ENCODE measurements at regions of chr4 and their contacts with region 1.

Region 1: GRCh38 chr4:3783406-3784306 is 17.5 kb downstream of the ADRA2C start:
- DNase-seq: no peak
- ATAC-seq: peak; percentile 27
- H3K4me3 ChIP-seq: peak overlapping the region in 1 of 3 experiments; percentile 48; a peak in 3 of 6 replicates
- H3K27ac ChIP-seq: peak overlapping the region; percentile 72
- H3K4me1 ChIP-seq: peaks cover 95% of the 10 kb centered on the region
- H3K27me3 ChIP-seq: peaks cover 0 to under 1% of the 10 kb centered on the region in 2 experiments; a peak in 1 of 5 replicates
- CTCF ChIP-seq: peak; percentile 75
- EP300 ChIP-seq: no peak
- POLR2A ChIP-seq: no peak
- RAD21 ChIP-seq: peak; percentile 48

Region 2: DNA sequence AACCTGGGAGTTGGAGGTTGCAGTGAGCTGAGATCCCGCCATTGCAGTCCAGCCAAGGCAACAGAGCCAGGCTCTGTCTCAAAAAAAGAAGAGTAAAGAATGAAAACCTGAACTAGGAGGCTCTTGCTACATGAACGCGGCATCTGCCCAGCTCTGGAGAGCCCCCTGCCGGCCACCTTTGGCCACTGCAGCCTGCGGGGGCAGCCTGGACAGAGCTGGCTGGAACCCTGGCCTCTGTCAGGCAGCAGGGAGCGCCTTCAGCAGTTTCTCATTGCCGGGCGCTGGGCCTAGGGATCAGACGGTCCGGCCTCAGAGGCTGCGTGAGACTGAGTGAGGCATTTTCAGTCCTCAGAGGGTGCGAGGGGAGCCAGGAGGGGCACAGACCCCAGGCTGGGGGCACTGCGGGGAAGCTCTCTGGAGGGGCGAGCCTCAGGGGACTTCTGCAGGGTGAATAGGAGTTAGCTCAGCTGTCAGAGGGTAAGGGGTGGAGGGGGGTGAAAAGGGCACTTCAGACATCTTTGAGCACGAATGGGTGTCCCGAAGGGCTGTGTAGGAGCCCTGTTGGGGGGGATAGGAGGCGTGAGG is 303.0 kb before region 1 on chr4:
- CTCF ChIA-PET with region 1: no interaction called
- POLR2A ChIA-PET with region 1: no interaction called
- in situ Hi-C with region 1: no loop called
- intact Hi-C with region 1: no loop called
- DNase-seq: peak; percentile 66
- ATAC-seq: peak; percentile 83
- H3K4me3 ChIP-seq: no peak overlapping the region
- H3K27ac ChIP-seq: no peak overlapping the region
- H3K4me1 ChIP-seq: peaks cover 28% of the 10 kb centered on the region
- H3K27me3 ChIP-seq: peaks cover 26 to 85% of the 10 kb centered on the region in 2 experiments
- CTCF ChIP-seq: peak; percentile 95
- EP300 ChIP-seq: no peak
- POLR2A ChIP-seq: no peak
- RAD21 ChIP-seq: peak; percentile 74

Region 3: DNA sequence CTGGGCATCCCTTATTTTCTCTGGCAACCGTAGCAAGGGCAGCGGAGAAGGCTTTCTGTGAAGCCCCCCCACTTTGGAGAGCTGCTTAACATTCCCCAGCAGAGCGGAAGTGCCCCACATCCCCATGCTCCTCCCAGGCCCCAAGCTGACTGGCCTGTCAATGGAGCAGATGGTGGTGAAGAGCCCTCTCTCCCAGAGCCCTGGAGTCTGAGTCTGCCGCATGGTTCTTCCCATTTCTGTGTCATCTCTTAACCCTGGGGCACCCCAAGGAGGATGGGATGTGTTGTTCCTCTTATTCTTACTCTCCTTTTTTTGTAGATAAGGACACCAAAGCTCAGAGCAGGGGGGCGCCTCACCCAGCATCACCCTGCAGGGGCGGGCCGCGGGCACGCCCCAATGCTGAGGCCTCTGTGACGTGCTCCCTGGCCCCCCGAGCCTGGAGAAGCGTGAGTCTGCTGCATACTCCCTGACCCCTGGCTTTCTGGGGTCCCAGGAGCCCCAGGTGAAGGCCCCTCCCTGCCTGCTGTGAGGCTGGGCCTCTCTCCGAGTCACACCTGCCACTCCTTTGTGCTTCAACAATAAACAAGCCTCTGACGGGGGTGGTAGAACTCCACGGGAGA is 18.4 kb after region 1 on chr4:
- CTCF ChIA-PET with region 1: no interaction called
- POLR2A ChIA-PET with region 1: interaction called, 46 read pairs
- in situ Hi-C with region 1: no loop called
- intact Hi-C with region 1: no loop called
- DNase-seq: no peak
- ATAC-seq: no peak
- H3K4me3 ChIP-seq: no peak overlapping the region; a peak in 1 of 6 replicates
- H3K27ac ChIP-seq: peak overlapping the region; percentile 73
- H3K4me1 ChIP-seq: peaks cover 59% of the 10 kb centered on the region
- H3K27me3 ChIP-seq: peaks cover 0 to 36% of the 10 kb centered on the region in 2 experiments; a peak in 3 of 5 replicates
- CTCF ChIP-seq: no peak
- EP300 ChIP-seq: no peak
- POLR2A ChIP-seq: no peak
- RAD21 ChIP-seq: no peak

Region 4: GRCh38 chr4:3827616-3828492 is 44.2 kb after region 1 on chr4:
- CTCF ChIA-PET with region 1: no interaction called
- POLR2A ChIA-PET with region 1: interaction called, 88 read pairs
- in situ Hi-C with region 1: no loop called
- intact Hi-C with region 1: loop called (anchors 1 kb)
- DNase-seq: peak; percentile 85
- ATAC-seq: peak; percentile 75
- H3K4me3 ChIP-seq: peak overlapping the region; percentile 4 to 61 (median 5); a peak in 3 of 6 replicates
- H3K27ac ChIP-seq: peak overlapping the region; percentile 91
- H3K4me1 ChIP-seq: peaks cover 100% of the 10 kb centered on the region
- H3K27me3 ChIP-seq: no peaks in the 10 kb centered on the region
- CTCF ChIP-seq: peak; percentile 47
- EP300 ChIP-seq: peak in 1 of 2 experiments; percentile 54; a peak in 1 of 4 replicates
- POLR2A ChIP-seq: peak in 1 of 2 experiments; percentile 38; a peak in 1 of 4 replicates
- RAD21 ChIP-seq: peak; percentile 56

Region 5: DNA sequence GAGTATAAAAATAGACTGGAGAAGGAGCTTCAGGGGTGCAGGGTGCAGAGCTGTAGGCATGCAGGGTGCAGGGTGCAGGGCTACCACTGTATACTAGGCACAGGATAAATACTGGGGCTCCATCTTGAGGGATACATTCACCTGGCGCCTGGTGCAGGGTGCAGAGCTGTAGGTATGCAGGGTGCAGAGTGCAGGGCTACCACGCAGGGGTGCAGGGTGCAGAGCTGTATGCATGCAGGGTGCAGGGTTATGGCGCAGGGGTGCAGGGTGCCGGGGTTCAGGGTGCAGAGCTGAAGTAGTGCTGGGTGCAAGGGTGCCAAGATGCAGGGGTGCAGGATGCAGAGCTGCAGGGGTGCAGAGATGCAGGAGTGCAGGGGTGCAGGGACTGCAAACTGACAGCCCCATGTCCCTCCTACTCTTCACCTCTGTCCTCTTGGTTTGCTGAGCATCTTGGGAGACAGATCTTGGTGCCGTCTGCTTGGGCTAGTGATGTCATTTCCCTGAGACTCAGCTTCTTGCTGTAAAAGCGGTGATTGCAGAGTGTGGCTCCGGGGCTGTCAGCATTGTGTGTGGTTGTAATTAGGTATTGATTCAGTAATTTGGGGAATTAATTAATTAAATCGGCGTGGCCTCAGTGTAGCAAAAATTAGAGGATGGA is 73.7 kb after region 1 on chr4:
- CTCF ChIA-PET with region 1: no interaction called
- POLR2A ChIA-PET with region 1: no interaction called
- in situ Hi-C with region 1: no loop called
- intact Hi-C with region 1: no loop called
- DNase-seq: no peak
- ATAC-seq: no peak; the same call in 2 of the 3 replicates
- H3K4me3 ChIP-seq: no peak overlapping the region
- H3K27ac ChIP-seq: no peak overlapping the region
- H3K4me1 ChIP-seq: peaks cover 41% of the 10 kb centered on the region
- H3K27me3 ChIP-seq: peaks cover 7 to 71% of the 10 kb centered on the region in 2 experiments; a peak in 4 of 5 replicates
- CTCF ChIP-seq: no peak
- EP300 ChIP-seq: no peak
- POLR2A ChIP-seq: no peak
- RAD21 ChIP-seq: no peak

Region 6: DNA sequence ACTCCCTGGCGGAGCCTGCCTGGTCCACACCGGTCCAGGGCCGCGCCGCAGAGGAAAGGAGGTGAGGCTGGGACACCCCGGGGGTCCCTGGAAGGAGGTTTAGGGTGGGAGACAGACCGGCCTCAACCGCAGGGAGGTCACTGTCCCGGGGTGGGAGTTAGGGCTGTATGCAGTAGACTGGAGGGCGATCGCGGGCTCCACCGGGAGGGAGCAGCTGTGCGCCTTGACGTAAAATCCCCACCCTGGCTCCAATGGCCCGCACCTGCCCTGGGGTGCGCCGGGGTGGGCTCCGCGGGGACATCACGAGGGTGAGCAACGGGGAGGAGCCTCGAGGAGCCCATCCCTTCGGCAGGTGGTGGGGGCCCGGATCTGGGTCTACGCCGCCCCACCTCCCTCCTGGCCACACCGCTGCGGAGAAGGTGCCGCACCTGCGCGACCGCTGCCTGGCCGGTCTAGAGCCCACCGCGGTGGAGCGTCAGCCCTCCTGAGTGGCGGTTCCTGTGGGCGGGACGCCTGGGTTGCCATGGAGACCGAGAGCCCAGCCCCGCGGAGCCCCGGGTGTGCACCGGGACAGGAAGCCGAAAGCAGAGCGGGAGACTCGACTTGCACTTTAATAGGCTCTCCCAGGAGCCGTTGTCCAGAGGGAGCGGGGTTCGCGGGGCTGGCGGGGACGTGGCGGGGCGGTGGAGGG is 87.7 kb after region 1 on chr4:
- CTCF ChIA-PET with region 1: no interaction called
- POLR2A ChIA-PET with region 1: interaction called, 3 read pairs
- in situ Hi-C with region 1: loop called (anchors 5 kb)
- intact Hi-C with region 1: loop called (anchors 5 kb)
- DNase-seq: no peak
- ATAC-seq: no peak
- H3K4me3 ChIP-seq: no peak overlapping the region
- H3K27ac ChIP-seq: no peak overlapping the region
- H3K4me1 ChIP-seq: peaks cover 25% of the 10 kb centered on the region
- H3K27me3 ChIP-seq: peaks cover 0 to 36% of the 10 kb centered on the region in 2 experiments; a peak in 3 of 5 replicates
- CTCF ChIP-seq: no peak
- EP300 ChIP-seq: no peak
- POLR2A ChIP-seq: no peak
- RAD21 ChIP-seq: no peak

Measured in HepG2 (cell line).